GM23248 (cell line): ENCODE measurements at regions of chr6 and their contacts with region 1.

Region 1: GRCh38 chr6:36724514-36725390 is 27.1 kb downstream of the RAB44 start:
- DNase-seq: peak; percentile 75
- H3K4me3 ChIP-seq: no peak overlapping the region
- H3K27ac ChIP-seq: no peak overlapping the region
- H3K4me1 ChIP-seq: peaks cover 14% of the 10 kb centered on the region; the same call in 1 of the 2 replicates
- H3K27me3 ChIP-seq: no peaks in the 10 kb centered on the region

Region 2: DNA sequence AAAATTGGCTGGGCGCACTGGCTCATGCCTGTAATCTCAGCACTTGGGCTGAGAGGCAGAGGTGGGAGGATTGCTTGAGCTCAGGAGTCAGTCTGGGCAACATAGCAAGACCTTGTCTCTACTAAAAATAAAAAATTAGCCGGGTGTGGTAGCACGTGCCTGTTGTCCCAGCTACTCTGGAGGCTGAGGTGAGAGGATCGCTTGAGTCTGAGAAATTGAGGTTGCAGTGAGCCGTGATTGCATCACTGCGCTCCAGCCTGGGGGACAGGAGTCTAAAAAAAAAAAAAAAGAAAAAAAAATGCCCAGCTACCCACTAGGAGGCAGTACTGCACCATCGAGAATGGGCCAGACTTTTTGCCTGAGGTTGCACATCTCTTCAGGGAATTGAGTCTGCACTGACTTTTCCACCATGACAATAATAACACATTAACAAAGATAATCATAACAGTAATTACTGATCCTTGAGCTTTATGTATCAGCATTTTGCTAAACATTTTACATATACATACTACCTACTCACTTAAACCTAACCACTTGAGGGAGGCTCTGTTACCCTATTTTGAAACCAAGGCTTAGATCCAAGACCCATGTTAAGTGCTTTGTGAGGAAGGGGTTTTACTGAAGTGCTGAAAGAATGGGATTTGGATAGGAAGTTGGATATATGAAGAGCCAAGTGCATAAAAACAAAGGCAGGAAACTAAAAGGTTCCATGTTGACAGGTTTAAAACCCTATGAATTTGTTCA is 109.6 kb before region 1 on chr6:
- in situ Hi-C with region 1: loop called (anchors 10 kb)
- DNase-seq: peak; percentile 84
- H3K4me3 ChIP-seq: no peak overlapping the region
- H3K27ac ChIP-seq: peak overlapping the region; percentile 31; the same call in 1 of the 2 replicates
- H3K4me1 ChIP-seq: peaks cover 10% of the 10 kb centered on the region; the same call in 1 of the 2 replicates
- H3K27me3 ChIP-seq: no peaks in the 10 kb centered on the region